ENCODE measurements at regions of chr19 and their contacts with region 1.

Region 1: DNA sequence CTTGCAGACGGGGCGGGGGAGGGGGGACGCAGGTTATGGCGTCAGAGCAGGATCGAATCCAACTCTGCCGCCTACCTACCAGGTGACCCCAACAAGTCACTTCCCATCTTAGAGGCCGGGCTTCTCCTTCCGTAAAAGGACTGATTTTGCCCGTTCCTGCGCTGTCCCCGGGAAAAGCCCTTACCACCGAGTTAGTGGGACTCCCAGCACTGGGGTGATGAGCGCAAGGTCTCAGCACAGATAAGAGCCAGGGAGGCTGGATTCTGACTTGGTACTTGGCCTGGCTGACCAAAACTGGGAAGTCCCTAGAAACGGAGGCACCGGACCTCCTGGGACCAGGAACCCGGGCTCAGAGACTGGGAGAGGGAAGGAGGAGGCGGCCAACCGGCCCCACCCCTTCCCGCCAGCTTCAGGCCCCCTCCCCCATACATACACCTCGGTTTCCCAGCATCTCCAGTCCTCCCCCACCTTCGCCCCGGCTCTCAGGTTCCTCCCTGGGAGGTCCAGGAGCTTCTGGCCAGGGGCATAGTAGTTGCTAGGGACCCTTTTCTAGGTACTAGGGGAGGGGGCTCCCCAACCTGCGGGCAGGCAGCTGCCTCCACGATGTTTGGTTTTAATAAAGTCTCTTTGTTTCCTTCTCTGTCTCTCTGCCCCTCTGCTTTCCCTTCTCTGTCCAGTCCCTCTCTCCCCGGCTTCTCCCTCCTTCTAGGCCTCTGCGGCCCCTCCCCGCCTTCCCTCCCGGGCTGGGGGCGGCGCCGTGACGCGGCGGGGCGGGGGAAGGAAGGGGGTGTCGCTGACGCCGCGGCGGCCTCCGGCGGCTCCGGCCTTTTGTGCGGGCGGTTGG is at the start of gene GRAMD1A:
- DNase-seq: peak; percentile 75
- H3K4me3 Mint-ChIP-seq: peak within 1 kb of the TSS; percentile 94
- H3K27ac Mint-ChIP-seq: peak within 1 kb of the TSS; percentile 98
- H3K4me1 Mint-ChIP-seq: peaks cover 72% of the 10 kb centered on the region
- H3K27me3 Mint-ChIP-seq: no peaks in the 10 kb centered on the region
- total RNA-seq, gene GRAMD1A: 106 to 114 TPM

Region 2: DNA sequence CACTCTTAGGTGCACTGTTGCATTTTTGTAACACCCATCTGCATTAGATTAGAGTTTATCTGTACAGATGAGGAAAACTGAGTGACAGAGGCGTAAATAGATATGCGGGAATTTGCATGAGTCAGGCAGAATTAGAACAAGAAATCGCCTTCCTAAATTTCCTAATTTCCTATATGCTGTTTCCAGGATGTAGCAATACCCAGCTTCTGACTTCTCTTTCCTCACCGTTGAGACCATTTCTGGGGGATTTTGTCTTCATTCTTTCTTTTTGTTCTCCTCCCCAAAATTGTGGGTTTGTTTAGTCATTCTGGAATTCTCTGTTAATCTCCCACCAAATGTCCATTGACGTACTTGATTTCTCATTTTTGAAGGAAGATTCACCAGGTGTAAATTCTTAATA is 25.1 kb before region 1 on chr19:
- CTCF ChIA-PET with region 1: interaction called, 14 read pairs
- POLR2A ChIA-PET with region 1: no interaction called
- DNase-seq: no peak
- H3K4me3 Mint-ChIP-seq: no peak overlapping the region
- H3K27ac Mint-ChIP-seq: no peak overlapping the region
- H3K4me1 Mint-ChIP-seq: peaks cover 23% of the 10 kb centered on the region
- H3K27me3 Mint-ChIP-seq: no peaks in the 10 kb centered on the region

Region 3: GRCh38 chr19:35013031-35013819 is 13.5 kb after region 1 on chr19:
- CTCF ChIA-PET with region 1: interaction called, 18 read pairs
- POLR2A ChIA-PET with region 1: no interaction called
- DNase-seq: peak; percentile 75
- H3K4me3 Mint-ChIP-seq: peak overlapping the region; percentile 50
- H3K27ac Mint-ChIP-seq: peak overlapping the region; percentile 86
- H3K4me1 Mint-ChIP-seq: peaks cover 69% of the 10 kb centered on the region
- H3K27me3 Mint-ChIP-seq: no peaks in the 10 kb centered on the region

Region 4: DNA sequence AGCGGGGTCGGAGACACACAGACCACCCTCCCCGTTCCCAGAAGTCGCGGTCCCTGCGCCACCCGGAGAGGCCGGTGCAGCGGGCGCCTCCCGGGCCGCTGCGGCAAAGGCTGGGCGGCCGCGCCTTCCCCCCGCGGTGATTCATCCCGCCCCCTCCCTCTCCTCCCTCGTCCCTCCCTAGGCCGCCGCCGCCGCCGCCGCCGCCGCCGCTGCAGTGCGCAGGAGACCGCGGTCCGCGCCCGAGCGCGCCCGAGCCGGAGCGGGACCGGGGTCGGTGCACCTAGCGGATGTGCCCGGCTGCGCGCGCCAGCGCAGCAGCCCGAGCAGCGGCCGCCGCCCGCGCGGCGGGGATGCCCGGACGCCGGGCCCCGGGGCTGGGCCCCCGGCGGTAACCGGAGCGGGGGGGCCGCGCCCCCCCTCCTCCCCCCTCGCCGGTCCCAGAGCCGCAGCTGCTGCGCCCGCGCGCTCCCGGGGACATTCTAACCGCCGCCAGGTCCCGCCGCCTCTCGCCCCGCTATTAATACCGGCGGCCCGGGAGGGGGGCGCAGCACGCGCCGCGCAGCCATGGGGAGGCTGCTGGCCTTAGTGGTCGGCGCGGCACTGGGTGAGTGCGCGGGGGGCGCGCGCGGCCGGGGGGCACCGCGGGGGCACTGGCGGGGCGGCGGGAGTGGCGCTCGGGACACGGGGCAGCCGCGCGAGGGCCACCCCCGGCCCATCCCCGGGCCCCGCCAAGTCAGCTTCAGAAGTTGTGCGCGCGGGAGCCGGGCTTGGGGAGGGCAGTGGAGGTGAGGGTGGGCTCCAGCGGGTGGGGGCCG is 30.7 kb after region 1 on chr19 and contains the start of gene SCN1B:
- CTCF ChIA-PET with region 1: no interaction called
- POLR2A ChIA-PET with region 1: no interaction called
- DNase-seq: peak; percentile 42
- H3K4me3 Mint-ChIP-seq: peak within 1 kb of the TSS; percentile 58
- H3K27ac Mint-ChIP-seq: no peak within 1 kb of the TSS
- H3K4me1 Mint-ChIP-seq: peaks cover 6% of the 10 kb centered on the region
- H3K27me3 Mint-ChIP-seq: peaks cover 35% of the 10 kb centered on the region
- total RNA-seq, gene SCN1B: 0.50 to 0.97 TPM

Measured in activated CD4-positive, alpha-beta T cell treated with anti-CD3 and anti-CD28 coated beads, Interleukin-2, amount 10 ng/mL, durations not matched to agents 7 days and 5 days (primary cell).